OCI-LY7 (cell line): ENCODE measurements at regions of chr7 and their contacts with region 1.

Region 1: DNA sequence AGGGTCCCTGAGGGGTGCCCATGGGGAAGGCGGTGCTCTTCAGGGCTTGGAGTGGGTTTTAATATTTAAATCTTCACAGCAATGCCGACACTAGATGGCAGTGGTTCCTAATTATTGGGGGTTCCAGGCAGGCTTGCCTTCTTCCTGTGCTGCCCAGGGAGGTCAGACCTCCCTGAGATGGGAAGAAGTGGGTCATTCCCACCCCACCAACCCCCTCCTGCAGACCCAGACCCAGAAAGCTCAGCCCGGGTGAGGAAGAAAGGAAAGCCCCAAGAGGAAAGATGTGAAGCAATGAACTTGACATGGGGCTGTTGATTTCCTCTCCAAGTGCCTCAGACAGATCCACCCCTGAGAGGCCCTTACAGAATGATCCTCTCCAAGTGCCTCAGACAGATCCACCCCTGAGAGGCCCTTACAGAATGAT is 85.1 kb upstream of the LANCL2 start:
- DNase-seq: peak; percentile 76
- H3K4me3 ChIP-seq: no peak overlapping the region
- H3K27ac ChIP-seq: no peak overlapping the region
- H3K4me1 ChIP-seq: no peaks in the 10 kb centered on the region
- CTCF ChIP-seq: peak; percentile 83

Region 2: DNA sequence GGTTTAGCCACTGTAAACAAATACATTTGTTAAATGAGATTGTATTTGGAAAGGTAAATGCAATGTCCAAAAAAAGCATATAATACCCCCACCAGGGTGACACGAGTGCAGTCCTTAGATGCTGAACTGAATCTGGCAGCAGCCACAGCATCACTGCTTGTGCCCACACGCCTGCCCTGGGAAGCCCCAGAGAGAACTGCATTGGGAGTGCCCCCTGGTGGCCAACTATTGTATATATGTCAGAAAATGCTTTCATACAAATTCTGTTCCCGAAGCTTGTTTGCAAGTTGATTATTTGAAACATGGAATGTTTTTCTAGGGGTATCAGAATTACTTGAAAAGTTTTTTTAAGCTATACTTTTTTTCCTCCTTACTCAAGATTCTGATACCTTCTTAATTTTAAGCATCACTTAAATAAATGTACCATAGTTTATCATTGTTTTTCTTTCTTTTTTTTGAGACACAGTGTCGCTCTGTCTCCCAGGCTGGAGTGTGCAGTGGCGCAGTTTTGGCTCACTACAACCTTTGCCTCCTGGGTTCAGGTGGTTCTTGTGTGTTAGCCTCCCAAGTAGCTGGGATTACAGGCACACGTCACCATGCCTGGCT is 135.2 kb after region 1 on chr7:
- CTCF ChIA-PET with region 1: interaction called, 5 read pairs
- POLR2A ChIA-PET with region 1: interaction called, 3 read pairs
- intact Hi-C with region 1: loop called (anchors 1 kb)
- DNase-seq: peak; percentile 84
- H3K4me3 ChIP-seq: no peak overlapping the region
- H3K27ac ChIP-seq: no peak overlapping the region
- H3K4me1 ChIP-seq: no peaks in the 10 kb centered on the region
- CTCF ChIP-seq: peak; percentile 93

Region 3: GRCh38 chr7:55432939-55433784 is 153.1 kb after region 1 on chr7:
- CTCF ChIA-PET with region 1: no interaction called
- POLR2A ChIA-PET with region 1: no interaction called
- intact Hi-C with region 1: loop called (anchors 5 kb)
- DNase-seq: peak; percentile 72
- H3K4me3 ChIP-seq: no peak overlapping the region
- H3K27ac ChIP-seq: no peak overlapping the region
- H3K4me1 ChIP-seq: no peaks in the 10 kb centered on the region
- CTCF ChIP-seq: peak; percentile 91

Region 4: DNA sequence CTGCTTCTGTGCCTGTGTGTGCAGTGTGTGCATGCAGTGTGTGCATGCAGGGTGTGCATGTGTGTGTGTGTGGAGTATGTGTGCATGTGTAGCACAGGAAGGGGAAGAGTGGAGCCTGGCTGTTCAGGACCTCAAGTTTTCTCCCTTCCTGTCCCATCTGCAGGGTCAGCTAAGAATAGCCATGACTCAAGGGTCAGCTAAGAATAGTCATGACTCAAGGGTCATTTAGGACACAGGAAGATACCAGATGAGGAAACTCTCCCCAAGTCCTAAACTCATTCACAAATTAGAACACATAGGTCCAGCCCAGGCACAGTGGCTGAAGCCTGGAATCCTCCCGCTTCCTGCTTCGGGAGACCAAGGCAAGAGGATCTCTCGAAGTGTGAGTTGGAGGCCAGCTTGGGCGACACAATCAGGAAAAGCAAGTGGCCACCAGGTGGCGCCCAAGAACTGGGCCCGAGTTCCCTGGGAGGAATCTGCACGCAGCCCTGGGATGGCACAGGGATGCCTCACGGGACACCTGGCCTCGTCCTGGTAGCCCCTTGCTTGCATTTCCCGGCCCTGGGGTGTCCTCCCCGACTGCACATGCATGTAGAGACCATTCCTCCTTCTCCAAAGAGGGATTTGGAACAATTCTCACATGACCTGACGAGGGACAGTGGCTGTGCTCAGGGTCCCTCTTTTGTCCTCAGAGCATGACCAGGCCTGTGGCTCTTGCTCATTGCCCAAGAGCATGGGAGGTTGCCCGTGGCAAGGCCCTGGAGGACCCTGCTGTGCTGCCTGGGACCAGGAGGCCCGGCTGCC is 313.7 kb after region 1 on chr7:
- CTCF ChIA-PET with region 1: no interaction called
- POLR2A ChIA-PET with region 1: no interaction called
- intact Hi-C with region 1: loop called (anchors 2 kb)
- DNase-seq: peak; percentile 76
- H3K4me3 ChIP-seq: no peak overlapping the region
- H3K27ac ChIP-seq: no peak overlapping the region
- H3K4me1 ChIP-seq: no peaks in the 10 kb centered on the region
- CTCF ChIP-seq: peak; percentile 92